ENCODE measurements at regions of chr10 and their contacts with region 1.

Region 1: DNA sequence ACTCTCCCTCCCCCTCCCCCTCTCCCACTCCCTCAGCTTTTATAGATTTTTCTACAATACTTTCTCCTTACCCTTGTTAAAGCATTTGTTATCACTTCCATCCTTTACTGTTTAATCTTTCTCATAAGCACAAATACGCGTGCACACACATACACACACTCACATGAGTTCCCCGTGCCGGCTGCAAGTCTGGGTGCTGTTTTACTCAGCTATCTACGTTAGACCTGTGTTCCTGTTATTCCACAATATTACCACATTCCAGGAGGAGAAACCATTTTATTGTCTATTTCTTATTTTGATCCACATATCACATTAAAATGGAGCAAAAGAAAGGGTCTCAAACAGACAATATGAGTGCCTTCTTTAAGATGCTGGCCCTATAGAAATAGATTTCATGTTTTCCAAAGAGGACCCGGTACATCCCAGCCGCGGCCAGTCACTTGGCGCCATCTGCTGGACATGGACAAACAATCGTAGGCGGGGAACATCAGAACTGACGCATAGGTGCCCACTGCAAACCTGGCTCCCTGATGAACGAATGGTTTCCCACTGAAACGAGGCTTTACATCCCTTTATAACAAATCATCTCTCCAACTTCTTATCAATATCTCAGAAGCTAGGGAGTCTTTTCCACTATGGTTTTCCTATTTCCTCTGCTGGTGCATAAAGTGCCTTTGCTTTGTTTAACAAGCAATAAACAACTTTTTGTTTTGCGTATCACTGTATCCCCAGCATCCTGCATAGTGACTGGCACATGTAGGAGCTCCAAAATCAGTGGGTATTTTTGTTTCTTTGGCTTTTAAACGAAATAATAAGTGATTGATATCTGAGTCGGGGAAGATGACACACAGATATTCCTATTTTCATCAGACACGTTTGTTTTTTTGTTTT is 25.2 kb upstream of the OPTN start:
- DNase-seq: peak; percentile 71 to 75 (median 74)
- ATAC-seq: peak; percentile 97
- H3K4me3 ChIP-seq: no peak overlapping the region
- H3K27ac ChIP-seq: no peak overlapping the region
- H3K4me1 ChIP-seq: no peaks in the 10 kb centered on the region
- H3K27me3 ChIP-seq: no peaks in the 10 kb centered on the region; a peak in 2 of 5 replicates
- CTCF ChIP-seq: peak; percentile 85 to 90 (median 88)
- EP300 ChIP-seq: no peak
- POLR2A ChIP-seq: no peak
- RAD21 ChIP-seq: peak; percentile 73 to 89

Region 2: DNA sequence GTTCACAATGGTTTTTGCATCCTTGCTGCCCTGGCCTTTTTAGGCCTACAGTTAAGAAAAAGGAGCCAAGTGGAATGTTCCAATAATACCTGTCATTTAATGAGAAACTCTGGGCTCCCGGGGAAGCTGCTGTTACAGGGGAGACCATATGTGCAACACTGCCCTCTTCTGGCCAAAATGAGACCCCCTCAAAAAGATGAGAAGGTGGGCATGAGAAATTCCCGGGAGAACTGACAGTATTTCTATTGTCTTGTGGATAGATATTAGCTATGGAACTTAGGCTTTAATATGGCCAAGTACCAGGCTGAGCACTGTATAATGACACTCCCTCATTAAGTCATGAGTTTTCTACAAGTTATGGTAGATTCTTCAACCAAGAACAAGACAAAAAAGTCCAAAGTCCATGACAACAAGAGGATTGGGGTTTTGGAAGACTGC is 172.7 kb before region 1 on chr10:
- CTCF ChIA-PET with region 1: interaction called, 4 read pairs
- POLR2A ChIA-PET with region 1: no interaction called
- in situ Hi-C with region 1: no loop called
- intact Hi-C with region 1: loop called (anchors 10 kb)
- DNase-seq: peak; percentile 62 to 69 (median 65)
- ATAC-seq: peak; percentile 75
- H3K4me3 ChIP-seq: no peak overlapping the region
- H3K27ac ChIP-seq: no peak overlapping the region
- H3K4me1 ChIP-seq: no peaks in the 10 kb centered on the region
- H3K27me3 ChIP-seq: peaks cover 11 to 40% of the 10 kb centered on the region in 2 experiments
- CTCF ChIP-seq: peak; percentile 63 to 78 (median 75)
- EP300 ChIP-seq: no peak
- POLR2A ChIP-seq: no peak
- RAD21 ChIP-seq: peak; percentile 44 to 65